ENCODE measurements at regions of chr22 and their contacts with region 1.

Region 1: DNA sequence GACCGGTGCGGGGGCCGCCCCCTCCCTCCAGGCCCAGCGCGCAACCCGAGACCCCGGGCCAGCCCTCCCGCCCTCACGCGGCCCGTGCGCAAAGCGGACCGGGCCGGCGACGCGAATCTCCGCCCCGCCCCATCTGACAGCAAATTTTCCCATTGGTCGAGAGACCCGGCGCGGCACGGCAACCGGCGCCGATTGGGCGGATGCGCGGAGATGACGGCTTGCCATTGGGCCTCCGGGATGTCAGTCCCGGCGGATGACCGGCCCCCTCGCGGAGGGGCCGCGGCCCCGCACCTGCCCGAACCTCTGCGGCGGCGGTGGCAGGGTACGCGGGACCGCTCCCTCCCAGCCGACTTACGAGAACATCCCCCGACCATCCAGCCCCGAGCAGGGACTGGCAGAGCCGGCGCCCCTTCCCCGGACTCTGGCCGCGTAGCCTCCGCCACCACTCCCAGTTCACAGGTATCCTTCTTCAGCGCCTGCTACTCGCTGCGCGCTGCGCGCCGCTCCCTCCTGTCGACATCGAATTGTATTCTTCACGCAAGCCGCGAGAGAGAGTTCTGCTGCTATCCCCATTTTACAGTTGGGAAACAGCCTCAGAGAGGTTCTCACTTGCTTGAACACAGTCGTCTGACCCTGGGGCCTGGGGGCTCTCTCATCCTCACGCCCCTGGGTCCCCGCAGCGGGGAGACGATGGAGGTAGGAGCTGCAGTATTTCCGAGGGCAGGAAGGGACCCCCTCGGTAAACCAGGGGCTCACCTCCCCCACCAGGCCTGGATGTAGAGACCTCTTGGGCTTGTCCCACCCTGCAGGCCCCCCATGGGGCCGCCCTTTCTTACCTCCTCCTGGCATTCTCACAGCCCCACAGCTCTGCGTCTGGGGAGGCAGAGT is at the start of gene ARVCF:
- DNase-seq: peak; percentile 94
- ATAC-seq: peak; percentile 72
- H3K4me3 Mint-ChIP-seq: peak within 1 kb of the TSS; percentile 78
- H3K27ac Mint-ChIP-seq: peak within 1 kb of the TSS; percentile 25
- H3K4me1 Mint-ChIP-seq: peaks cover 15% of the 10 kb centered on the region
- H3K27me3 Mint-ChIP-seq: peaks cover 6% of the 10 kb centered on the region
- total RNA-seq, gene ARVCF: 1.3 to 2.1 TPM

Region 2: GRCh38 chr22:19479357-19480172 is 537.4 kb before region 1 on chr22 and contains the start of gene CDC45:
- CTCF ChIA-PET with region 1: no interaction called
- POLR2A ChIA-PET with region 1: no interaction called
- intact Hi-C with region 1: loop called in 1 of 2 experiments (anchors 1 kb)
- DNase-seq: peak; percentile 97
- ATAC-seq: peak; percentile 91
- H3K4me3 Mint-ChIP-seq: peak within 1 kb of the TSS; percentile 99
- H3K27ac Mint-ChIP-seq: peak within 1 kb of the TSS; percentile 99
- H3K4me1 Mint-ChIP-seq: peaks cover 45% of the 10 kb centered on the region
- H3K27me3 Mint-ChIP-seq: no peaks in the 10 kb centered on the region
- total RNA-seq, gene CDC45: 103 to 111 TPM

Region 3: DNA sequence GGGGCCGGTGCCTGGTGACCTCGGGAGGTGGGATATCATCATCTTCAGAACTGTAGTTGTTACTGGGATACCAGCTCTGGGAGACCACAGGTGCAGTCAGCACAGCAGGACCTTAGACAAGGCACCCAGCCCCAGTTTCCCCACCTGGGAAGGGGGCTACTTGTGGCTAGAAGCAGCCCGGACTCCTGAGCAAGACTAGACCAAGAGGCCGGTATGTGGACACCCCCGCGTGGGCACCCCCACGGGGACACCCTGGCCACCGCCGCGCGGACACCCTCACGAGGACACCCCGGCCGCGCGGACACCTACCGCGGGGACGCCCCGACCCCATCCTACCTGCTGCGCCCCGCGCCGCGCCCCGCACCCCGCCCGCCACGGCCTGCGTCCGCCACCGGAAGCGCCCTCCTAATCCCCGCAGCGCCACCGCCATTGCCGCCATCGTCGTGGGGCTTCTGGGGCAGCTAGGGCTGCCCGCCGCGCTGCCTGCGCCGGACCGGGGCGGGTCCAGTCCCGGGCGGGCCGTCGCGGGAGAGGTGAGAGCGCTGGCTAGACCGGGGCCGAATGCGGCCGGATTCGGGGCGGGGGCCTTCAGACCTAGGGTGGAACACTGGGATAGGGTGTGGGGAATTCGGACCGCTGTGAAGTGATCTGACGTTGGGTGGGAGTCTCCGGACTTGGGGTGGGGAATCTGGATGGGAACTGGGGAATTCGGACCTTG is 75.5 kb before region 1 on chr22 and contains the starts of genes COMT and TXNRD2:
- CTCF ChIA-PET with region 1: no interaction called
- POLR2A ChIA-PET with region 1: no interaction called
- intact Hi-C with region 1: loop called in 1 of 2 experiments (anchors 1 kb)
- DNase-seq: peak; percentile 83
- ATAC-seq: peak; percentile 85
- H3K4me3 Mint-ChIP-seq: peak within 1 kb of the TSS; percentile 98
- H3K27ac Mint-ChIP-seq: peak within 1 kb of the TSS; percentile 98
- H3K4me1 Mint-ChIP-seq: peaks cover 27% of the 10 kb centered on the region
- H3K27me3 Mint-ChIP-seq: no peaks in the 10 kb centered on the region
- total RNA-seq, gene COMT: 63.5 to 78.5 TPM
- total RNA-seq, gene TXNRD2: 24.1 to 25.3 TPM

Region 4: GRCh38 chr22:19986410-19987341 is 30.3 kb before region 1 on chr22:
- CTCF ChIA-PET with region 1: no interaction called
- POLR2A ChIA-PET with region 1: no interaction called
- intact Hi-C with region 1: loop called in 1 of 2 experiments (anchors 1 kb)
- DNase-seq: peak; percentile 84
- ATAC-seq: peak; percentile 88
- H3K4me3 Mint-ChIP-seq: no peak overlapping the region
- H3K27ac Mint-ChIP-seq: no peak overlapping the region
- H3K4me1 Mint-ChIP-seq: no peaks in the 10 kb centered on the region
- H3K27me3 Mint-ChIP-seq: no peaks in the 10 kb centered on the region

Region 5: DNA sequence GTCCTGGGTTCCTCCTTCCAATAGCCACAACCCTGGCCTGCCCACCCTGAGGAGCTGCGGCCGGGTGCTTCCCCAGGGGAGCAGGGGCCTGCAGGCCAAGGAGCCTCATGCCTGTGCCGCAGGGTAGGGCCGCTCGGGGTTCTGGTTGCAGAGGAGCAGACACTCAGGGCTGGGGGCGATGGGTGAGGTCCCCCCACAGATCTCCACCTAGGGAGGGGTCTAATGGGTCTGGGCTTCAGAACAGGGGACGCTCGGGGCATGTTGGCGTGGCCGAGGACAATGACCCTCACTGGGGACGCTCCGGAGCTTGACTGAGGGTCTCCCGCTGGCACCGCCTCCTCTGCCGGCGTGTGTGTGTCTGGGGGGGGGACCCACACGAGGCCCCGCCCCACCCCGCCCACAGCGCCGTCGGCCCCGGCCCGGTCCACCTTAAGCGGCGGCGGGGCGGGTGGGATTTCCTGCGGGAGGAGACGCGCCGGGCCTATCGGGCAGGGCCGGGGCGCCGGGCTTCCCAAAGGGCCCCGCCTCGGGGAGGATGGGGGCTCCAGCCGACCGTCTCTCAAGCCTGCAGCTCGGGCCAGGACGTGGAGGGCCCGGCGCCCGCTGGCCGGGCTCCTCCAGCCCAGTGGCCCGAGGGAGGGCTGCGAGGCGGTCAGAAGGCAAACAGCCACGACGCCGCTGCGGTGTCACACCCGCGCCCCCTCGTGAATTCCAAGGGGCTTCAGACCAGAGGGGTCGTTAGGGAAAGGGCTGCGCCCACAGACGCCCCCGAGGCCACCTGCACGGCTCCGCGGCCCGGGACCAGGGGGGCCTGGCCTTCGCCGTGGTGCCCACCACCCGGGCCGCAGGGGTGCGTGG is 114.0 kb after region 1 on chr22:
- CTCF ChIA-PET with region 1: no interaction called
- POLR2A ChIA-PET with region 1: no interaction called
- intact Hi-C with region 1: loop called in 1 of 2 experiments (anchors 1 kb)
- DNase-seq: peak; percentile 81
- ATAC-seq: peak; percentile 52
- H3K4me3 Mint-ChIP-seq: peak overlapping the region; percentile 51
- H3K27ac Mint-ChIP-seq: no peak overlapping the region
- H3K4me1 Mint-ChIP-seq: peaks cover 33% of the 10 kb centered on the region
- H3K27me3 Mint-ChIP-seq: no peaks in the 10 kb centered on the region

Region 6: DNA sequence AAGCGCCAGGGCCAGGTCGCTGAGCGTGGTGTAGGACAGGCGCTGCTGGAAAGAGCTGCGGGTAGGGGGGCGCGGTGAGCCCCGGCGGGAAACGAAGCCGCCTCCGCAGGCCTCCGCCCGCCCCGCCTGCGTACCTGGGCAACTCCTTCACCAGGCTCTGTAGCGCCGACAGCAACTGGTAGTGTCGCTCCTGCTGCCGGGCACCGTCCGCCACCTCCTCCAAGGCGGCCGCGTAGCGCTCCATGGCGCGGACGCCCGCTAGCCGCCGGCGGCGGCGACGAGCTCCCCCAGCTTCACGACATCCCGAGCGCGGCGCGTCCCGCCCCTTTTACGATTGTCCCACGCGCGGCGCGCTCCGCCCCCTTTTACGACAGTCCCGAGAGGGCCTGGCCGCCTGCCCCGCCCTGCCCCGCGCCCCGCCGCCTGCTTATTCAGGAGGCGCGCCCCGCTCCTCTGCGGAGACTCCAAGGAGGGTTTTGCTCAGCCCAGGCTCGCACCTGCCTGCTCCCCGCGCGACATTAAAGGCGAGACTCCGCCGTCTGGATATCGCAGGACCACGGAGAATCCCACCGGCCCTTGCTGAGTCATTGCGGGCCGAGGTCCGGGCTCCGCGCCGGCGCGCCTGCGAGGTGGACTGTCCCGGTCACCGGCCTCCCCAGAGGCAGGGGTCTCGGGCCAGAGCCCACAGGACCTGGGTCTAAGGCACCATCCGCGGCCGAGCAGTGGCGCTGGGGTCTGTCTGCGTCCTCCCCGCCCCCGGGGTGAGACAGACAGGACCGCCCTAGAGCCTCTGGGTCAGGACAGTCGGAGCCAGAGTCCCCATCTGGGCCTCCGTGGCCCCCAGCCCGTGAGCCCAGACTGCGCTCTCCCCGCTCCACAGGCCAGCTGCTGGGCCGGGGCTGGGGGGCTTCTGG is 303.0 kb after region 1 on chr22 and contains the start of gene DGCR6L:
- CTCF ChIA-PET with region 1: no interaction called
- POLR2A ChIA-PET with region 1: no interaction called
- intact Hi-C with region 1: no loop called
- DNase-seq: peak; percentile 99
- ATAC-seq: peak; percentile 53
- H3K4me3 Mint-ChIP-seq: peak within 1 kb of the TSS; percentile 85
- H3K27ac Mint-ChIP-seq: peak within 1 kb of the TSS; percentile 79
- H3K4me1 Mint-ChIP-seq: peaks cover 55% of the 10 kb centered on the region
- H3K27me3 Mint-ChIP-seq: no peaks in the 10 kb centered on the region
- total RNA-seq, gene DGCR6L: 22.4 to 24.8 TPM